BJ (cell line): ENCODE measurements at regions of chr12 and their contacts with region 1.

Region 1: DNA sequence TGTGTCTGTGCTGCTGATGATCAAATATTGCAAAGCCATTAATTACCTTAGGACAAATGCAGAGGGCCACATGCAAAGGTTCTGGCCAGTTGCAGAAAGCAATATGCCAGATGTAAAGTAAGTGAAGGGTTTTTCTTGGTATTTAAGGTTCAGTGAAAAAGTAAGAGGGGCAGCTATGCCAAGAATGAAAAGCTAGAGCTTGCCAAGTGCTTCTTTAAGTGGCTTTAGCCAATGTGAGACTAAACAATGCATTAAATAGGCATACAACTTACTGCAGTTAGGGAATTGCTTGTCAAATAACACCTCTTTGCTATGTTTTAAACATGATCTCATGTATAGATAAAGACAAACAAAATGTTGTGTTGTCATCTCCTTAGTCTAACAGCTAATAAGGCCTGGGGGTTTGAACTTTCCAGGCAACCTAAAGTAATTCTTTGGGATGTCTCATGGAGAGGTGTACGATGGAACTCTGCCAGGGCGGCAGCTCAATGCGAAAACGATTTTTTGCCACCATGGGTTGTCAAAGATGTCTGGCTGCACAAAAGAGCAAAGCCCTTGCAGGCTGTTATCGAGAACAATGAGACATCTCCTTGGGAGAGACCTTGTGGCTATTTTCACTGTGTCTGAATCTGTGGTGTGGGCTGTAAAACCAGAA is 12.0 kb downstream of the IGF1 start:
- DNase-seq: no peak
- H3K4me3 ChIP-seq: no peak overlapping the region
- H3K27me3 ChIP-seq: no peaks in the 10 kb centered on the region
- CTCF ChIP-seq: no peak

Region 2: GRCh38 chr12:102433304-102433703 is 35.1 kb before region 1 on chr12:
- CTCF ChIA-PET with region 1: no interaction called
- POLR2A ChIA-PET with region 1: no interaction called
- DNase-seq: no peak
- H3K4me3 ChIP-seq: no peak overlapping the region
- H3K27me3 ChIP-seq: no peaks in the 10 kb centered on the region
- CTCF ChIP-seq: no peak

Region 3: DNA sequence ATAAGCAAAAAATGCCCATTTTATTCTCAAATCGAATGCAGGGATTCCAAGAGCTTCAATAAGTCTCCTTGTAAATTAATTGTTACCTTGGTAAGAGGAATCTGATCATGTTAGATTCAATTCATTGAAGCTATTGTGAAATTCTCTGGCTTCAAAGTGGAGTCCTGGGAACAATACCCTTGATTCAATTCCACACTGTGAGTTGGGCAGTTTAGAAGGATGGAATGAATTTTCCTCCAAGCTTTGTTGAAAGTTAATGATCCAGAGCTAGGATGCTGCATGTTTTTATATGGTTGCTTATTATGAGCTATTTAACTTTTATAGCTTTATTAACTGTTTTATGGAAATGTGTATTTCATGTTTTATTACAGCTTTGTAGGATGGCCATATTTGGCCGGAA is 101.9 kb after region 1 on chr12:
- CTCF ChIA-PET with region 1: no interaction called
- POLR2A ChIA-PET with region 1: interaction called, 11 read pairs
- DNase-seq: no peak
- H3K4me3 ChIP-seq: no peak overlapping the region
- H3K27me3 ChIP-seq: no peaks in the 10 kb centered on the region
- CTCF ChIP-seq: no peak